ENCODE measurements at regions of chr6 and their contacts with region 1.

Region 1: DNA sequence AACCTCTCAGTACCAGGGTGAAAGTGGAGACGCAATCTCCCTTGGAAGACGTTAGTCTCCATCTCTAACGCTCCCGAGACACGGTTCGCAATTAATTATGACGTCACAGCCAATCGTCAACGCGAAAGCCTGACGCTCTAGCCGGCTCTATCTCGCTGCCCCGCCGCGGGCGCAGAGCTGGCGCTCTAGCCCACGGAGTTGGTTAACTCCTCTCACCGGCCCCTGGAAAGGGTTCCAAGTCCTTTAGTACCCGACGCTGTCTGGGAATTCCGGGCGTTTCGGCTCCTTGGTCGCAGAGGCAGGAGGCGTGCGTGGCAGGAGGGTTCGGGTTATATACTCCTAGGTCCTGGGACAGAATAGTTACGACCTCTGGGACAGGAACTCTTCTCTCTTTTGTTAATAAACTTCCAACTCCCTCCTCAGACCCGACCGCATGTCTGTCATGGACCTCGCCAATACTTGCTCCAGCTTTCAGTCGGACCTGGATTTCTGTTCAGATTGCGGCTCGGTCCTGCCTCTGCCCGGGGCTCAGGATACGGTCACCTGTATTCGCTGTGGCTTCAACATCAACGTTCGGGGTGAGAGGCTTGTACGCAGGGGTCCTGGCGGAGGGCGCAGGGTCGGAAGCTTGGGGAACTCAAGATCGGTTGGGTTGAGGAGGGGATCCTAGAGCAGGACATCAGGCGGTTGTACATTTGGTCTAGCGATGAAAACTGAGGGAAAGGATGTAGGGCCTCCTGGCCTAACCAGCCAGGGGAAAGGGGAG is at the start of gene POLR1H:
- DNase-seq: peak; percentile 95
- ATAC-seq: peak; percentile 98
- H3K4me3 ChIP-seq: peak within 1 kb of the TSS; percentile 89 to 99 (median 93)
- H3K27ac ChIP-seq: peak within 1 kb of the TSS; percentile 75
- H3K4me1 ChIP-seq: peaks cover 35% of the 10 kb centered on the region
- H3K27me3 ChIP-seq: peaks cover 0 to 4% of the 10 kb centered on the region in 2 experiments; a peak in 1 of 5 replicates
- CTCF ChIP-seq: no peak; the same call in 1 of the 2 replicates
- EP300 ChIP-seq: peak; percentile 34 to 59; a peak in 3 of 4 replicates
- POLR2A ChIP-seq: peak; percentile 90 to 97
- RAD21 ChIP-seq: no peak; the same call in 1 of the 2 replicates
- total RNA-seq, gene POLR1H: 79.8 and 106 TPM in 2 replicates

Region 2: GRCh38 chr6:29847871-29848630 is 213.2 kb before region 1 on chr6:
- CTCF ChIA-PET with region 1: no interaction called
- POLR2A ChIA-PET with region 1: no interaction called
- in situ Hi-C with region 1: no loop called
- intact Hi-C with region 1: no loop called
- DNase-seq: peak; percentile 54
- ATAC-seq: peak; percentile 97
- H3K4me3 ChIP-seq: no peak overlapping the region
- H3K27ac ChIP-seq: no peak overlapping the region
- H3K4me1 ChIP-seq: no peaks in the 10 kb centered on the region
- H3K27me3 ChIP-seq: peaks cover 0 to 1% of the 10 kb centered on the region in 2 experiments; a peak in 3 of 5 replicates
- CTCF ChIP-seq: peak; percentile 99
- EP300 ChIP-seq: no peak
- POLR2A ChIP-seq: no peak
- RAD21 ChIP-seq: peak; percentile 99

Region 3: DNA sequence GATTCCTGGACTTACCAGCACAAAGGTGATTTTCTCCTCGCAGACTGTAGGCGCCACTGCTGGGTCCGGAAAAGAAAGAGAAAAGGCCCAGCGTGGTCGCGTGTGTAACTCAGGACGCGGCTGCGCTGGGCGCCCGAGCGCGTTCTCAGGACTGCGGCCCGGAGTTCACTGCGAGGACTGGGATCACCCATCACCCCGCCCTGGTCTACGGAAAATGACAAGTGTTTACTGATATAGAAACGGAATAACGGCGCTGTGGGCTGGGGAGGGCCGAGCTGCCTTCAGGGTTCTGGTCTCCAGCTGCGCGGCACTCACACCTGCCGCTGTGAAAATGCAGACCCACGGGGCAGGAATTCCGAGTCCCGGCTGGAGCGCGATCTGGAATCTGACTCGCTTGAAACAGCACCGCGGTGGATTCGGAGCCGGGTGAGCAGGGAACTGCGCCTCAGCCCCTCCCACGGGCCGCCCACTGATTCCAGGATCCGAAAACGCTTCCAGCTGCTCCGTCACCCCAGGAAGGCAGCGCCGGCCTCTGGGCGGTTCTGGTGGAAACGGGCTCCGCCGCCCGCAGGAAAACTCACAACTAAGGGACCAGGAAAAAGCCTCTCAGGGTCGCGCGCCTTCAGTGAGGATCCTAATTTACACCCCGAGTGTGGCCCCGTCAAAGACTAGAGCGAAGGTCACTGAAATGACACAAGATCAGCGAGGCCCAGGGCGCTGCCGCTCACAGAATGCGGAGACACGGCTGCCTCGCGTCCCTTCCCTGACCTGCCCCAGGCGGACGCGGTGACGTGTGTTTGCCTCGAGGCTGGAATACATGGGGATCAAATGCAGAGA is 84.5 kb before region 1 on chr6:
- CTCF ChIA-PET with region 1: no interaction called
- POLR2A ChIA-PET with region 1: interaction called, 10 read pairs
- in situ Hi-C with region 1: no loop called
- intact Hi-C with region 1: no loop called
- DNase-seq: peak; percentile 77
- ATAC-seq: peak; percentile 93
- H3K4me3 ChIP-seq: peak overlapping the region; percentile 54 to 76 (median 65)
- H3K27ac ChIP-seq: peak overlapping the region; percentile 76
- H3K4me1 ChIP-seq: peaks cover 40% of the 10 kb centered on the region
- H3K27me3 ChIP-seq: no peaks in the 10 kb centered on the region
- CTCF ChIP-seq: peak; percentile 60
- EP300 ChIP-seq: 0 out of 4 replicates have a peak, but pooled peaks of 1 of the 2 experiments have one; percentile 19
- POLR2A ChIP-seq: peak; percentile 57 to 64; a peak in 3 of 4 replicates
- RAD21 ChIP-seq: peak; percentile 60

Region 4: DNA sequence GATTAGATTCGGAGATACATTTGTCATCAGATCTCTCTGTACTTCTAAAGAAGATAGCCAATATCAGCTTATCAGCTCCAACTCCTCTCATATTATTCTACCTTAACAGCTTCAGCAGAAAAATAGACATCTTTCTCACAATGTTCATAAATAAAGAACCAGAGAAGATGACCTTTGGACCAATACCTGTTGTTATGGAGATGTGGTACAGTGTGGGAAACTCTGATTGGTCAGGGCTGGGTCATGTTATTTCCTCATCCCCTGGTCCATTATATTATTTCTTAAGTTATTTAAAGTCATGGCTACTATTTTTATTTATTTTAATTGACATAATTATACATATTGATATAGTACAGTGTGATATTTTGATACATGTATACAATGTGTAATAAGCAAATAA is 36.1 kb before region 1 on chr6:
- CTCF ChIA-PET with region 1: no interaction called
- POLR2A ChIA-PET with region 1: no interaction called
- in situ Hi-C with region 1: no loop called
- intact Hi-C with region 1: no loop called
- DNase-seq: no peak
- ATAC-seq: no peak
- H3K4me3 ChIP-seq: no peak overlapping the region
- H3K27ac ChIP-seq: no peak overlapping the region
- H3K4me1 ChIP-seq: no peaks in the 10 kb centered on the region
- H3K27me3 ChIP-seq: no peaks in the 10 kb centered on the region
- CTCF ChIP-seq: no peak
- EP300 ChIP-seq: no peak
- POLR2A ChIP-seq: no peak
- RAD21 ChIP-seq: no peak

Region 5: DNA sequence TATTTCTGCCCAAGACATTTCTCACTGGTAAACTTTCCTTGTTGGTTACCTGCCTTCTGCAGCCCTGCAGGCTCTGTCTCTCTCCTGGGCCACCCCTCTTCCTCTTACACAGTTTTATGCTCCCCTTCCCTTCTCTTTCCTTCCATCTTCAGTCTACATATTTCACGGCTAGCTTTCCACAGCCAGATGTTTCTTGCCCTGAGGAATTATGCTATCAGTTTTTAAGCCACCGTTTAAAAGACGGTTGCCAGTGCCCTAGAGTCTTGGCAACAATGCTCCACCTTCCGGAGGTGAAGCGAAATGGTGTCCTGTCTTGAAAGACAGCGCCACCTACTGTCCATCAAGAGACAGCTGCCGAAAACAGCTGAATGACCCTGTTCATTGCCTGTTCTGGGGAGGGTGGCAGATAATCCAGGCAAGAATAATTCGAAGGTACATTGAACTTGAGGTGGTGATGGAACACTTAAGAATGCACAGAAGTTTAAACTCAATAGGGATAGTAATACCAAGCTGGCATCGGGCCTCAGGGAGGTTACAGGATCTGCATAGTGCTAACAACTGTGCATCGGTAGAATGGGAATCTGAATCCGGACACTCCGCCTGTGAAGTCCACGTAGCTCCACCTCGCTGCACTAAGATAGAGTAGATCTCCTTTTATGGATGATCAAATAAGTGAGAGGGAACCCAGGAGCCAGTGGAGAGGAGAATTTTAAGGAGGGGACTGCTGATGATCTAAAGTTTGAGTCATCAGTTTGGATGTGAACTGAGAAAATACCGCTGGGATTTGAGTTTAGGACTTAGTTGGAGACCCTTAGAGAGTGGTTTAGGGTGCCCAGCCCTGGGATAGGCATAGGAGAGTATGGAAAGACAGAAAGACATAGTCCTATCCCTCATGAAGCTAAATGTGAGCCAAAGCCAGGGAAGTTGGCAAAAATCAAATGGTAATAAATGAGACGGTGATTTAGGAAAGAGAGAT is 69.9 kb after region 1 on chr6:
- CTCF ChIA-PET with region 1: no interaction called
- POLR2A ChIA-PET with region 1: interaction called, 19 read pairs
- in situ Hi-C with region 1: no loop called
- intact Hi-C with region 1: loop called (anchors 2 kb)
- DNase-seq: peak; percentile 89
- ATAC-seq: peak; percentile 70
- H3K4me3 ChIP-seq: peak overlapping the region in 1 of 3 experiments; percentile 28; a peak in 2 of 6 replicates
- H3K27ac ChIP-seq: no peak overlapping the region
- H3K4me1 ChIP-seq: peaks cover 75% of the 10 kb centered on the region
- H3K27me3 ChIP-seq: no peaks in the 10 kb centered on the region
- CTCF ChIP-seq: peak; percentile 100
- EP300 ChIP-seq: no peak
- POLR2A ChIP-seq: no peak
- RAD21 ChIP-seq: peak; percentile 90

Region 6: DNA sequence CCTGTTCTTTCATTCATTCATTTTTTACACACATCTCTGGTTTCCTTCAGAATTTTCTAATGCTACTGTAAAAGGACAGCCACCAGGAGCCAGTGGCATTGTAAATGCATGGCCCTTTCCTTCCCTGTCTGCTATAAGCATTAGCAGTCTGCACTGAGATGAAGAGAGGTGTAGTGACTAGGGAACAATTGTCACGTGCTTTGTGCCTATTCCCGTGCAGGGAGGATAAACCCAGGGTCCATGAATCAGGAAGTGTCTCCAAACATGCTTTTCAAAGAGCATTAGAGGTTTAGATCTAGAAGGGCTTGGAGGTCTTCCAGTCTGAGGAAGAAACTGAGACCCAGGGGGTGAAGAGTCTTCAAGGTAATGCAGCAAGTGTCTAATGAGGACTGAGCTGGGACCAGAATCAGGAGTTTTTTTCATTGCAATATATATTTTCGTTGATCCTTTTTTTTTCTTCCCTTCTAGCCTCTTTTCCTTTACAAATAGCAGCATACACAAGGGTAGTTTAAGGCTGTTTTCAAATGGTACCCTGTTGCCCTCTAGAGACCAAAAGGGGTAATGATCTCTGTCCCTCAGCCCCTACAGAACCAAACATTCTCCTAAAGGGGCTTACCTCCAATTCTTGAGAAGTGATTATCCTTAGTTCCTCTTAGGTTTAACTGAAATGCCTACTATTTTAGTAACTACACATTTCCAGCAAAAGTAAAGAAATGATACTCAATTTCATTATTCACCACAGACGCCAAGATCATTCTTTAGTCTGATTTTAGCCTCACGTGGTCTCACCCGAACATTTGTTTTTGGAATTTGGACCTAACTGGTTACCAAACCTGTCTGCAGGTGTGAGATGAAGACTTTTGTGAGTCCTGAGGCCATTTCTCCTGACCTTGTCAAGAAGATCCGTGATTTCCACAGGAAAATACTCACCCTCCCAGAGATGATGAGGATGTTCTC is 108.7 kb after region 1 on chr6:
- CTCF ChIA-PET with region 1: no interaction called
- POLR2A ChIA-PET with region 1: interaction called, 4 read pairs
- in situ Hi-C with region 1: no loop called
- intact Hi-C with region 1: loop called (anchors 2 kb)
- DNase-seq: peak; percentile 68
- ATAC-seq: peak; percentile 93
- H3K4me3 ChIP-seq: no peak overlapping the region
- H3K27ac ChIP-seq: no peak overlapping the region
- H3K4me1 ChIP-seq: peaks cover 28% of the 10 kb centered on the region
- H3K27me3 ChIP-seq: peaks cover 0 to under 1% of the 10 kb centered on the region in 2 experiments; a peak in 1 of 5 replicates
- CTCF ChIP-seq: peak; percentile 86
- EP300 ChIP-seq: no peak
- POLR2A ChIP-seq: no peak
- RAD21 ChIP-seq: peak; percentile 89

Region 7: DNA sequence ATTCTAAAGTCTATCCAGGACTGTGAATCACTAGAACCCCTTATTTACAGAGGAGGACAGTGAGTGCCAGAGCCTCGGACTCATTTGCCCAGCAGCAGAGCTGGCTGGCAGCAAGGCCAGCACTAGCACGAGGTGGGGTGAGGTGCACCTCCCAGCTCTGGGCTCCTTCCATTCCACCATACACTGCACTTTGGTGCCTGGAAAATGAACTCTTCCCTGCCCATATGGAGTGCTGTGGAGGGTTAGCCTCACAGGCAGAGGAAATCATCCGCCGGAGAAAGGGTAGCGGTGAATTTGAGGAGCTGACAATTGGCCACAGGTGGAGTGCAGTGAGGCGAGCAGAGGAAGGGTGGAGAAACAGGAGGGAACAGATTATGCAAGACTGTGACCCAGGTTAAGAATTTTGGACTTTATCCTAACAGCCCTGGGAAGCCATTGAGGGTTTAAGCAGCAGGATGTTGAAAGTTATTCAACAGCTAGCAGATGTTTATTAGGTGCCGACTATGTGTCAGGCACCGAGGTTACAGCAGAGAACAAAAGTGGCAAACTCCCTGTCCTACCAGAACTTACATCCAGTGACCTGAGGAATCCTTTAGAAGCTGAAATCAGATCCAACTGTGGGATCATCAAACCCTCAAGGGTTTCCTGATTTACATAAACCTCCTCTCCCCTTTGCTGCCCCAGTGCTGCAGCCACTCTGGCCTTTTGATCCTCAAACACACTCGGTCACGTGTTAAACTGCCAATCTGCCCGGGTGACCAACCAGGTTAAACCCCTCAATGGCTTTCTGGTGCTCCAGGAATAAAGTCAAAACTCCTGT is 145.7 kb after region 1 on chr6:
- CTCF ChIA-PET with region 1: no interaction called
- POLR2A ChIA-PET with region 1: interaction called, 10 read pairs
- in situ Hi-C with region 1: no loop called
- intact Hi-C with region 1: no loop called
- DNase-seq: peak; percentile 95
- ATAC-seq: peak; percentile 82
- H3K4me3 ChIP-seq: peak overlapping the region; percentile 27 to 66 (median 46)
- H3K27ac ChIP-seq: peak overlapping the region; percentile 93
- H3K4me1 ChIP-seq: peaks cover 86% of the 10 kb centered on the region
- H3K27me3 ChIP-seq: no peaks in the 10 kb centered on the region
- CTCF ChIP-seq: no peak
- EP300 ChIP-seq: peak in 1 of 2 experiments; percentile 81; a peak in 2 of 4 replicates
- POLR2A ChIP-seq: peak in 1 of 2 experiments; percentile 54; a peak in 3 of 4 replicates
- RAD21 ChIP-seq: 0 out of 2 replicates have a peak, but pooled peaks have one; percentile 9

Region 8: DNA sequence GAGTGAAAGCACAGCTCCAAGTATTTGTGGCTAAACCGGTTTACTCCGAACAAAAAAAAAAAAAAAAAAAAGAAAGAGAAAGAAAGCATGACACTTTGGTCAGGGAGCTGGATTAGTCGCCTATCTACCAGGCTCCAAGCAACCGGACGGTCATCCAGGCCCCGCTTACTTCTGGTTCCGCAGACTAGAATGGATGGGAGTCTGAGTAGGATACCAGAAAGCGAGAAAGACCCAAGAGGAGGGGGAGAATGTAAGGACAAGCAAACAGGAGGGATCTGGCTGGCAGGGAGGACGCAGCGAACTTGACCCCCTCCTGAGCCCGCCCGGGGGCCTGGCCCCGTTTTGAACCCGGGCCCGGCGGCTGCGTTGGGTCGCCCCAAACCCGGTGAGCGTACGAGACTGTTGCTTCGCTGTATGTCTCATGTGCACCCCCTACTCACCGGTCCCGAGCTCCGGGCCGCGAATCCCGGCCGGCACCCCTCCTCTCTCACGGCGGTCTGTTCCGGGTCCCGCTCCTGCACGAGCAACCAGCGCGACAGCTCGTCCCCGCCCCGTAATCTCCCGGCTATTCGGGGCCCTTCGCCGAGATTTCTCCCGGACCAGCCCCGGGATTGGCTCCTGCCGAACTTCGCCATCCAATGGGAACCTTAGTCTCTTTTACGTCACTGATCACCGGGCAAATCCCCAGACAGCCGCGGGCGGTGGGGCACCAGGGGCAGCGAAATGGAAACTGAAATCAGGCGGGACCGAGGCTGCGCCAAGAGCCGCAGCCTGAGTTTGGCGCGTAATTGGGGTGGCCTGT is 151.8 kb after region 1 on chr6 and contains the start of gene TRIM26:
- CTCF ChIA-PET with region 1: no interaction called
- POLR2A ChIA-PET with region 1: interaction called, 11 read pairs
- in situ Hi-C with region 1: no loop called
- intact Hi-C with region 1: no loop called
- DNase-seq: peak; percentile 97
- ATAC-seq: peak; percentile 94
- H3K4me3 ChIP-seq: peak within 1 kb of the TSS; percentile 92 to 99 (median 95)
- H3K27ac ChIP-seq: peak within 1 kb of the TSS; percentile 93
- H3K4me1 ChIP-seq: peaks cover 50% of the 10 kb centered on the region
- H3K27me3 ChIP-seq: peaks cover 0 to 2% of the 10 kb centered on the region in 2 experiments; a peak in 1 of 5 replicates
- CTCF ChIP-seq: no peak; the same call in 1 of the 2 replicates
- EP300 ChIP-seq: peak in 1 of 2 experiments; percentile 66; a peak in 2 of 4 replicates
- POLR2A ChIP-seq: peak; percentile 84 to 94
- RAD21 ChIP-seq: peak; percentile 43; the same call in 1 of the 2 replicates
- total RNA-seq, gene TRIM26: 38.7 and 46.2 TPM in 2 replicates

Region 9: GRCh38 chr6:30378290-30378937 is 317.1 kb after region 1 on chr6:
- CTCF ChIA-PET with region 1: no interaction called
- POLR2A ChIA-PET with region 1: no interaction called
- in situ Hi-C with region 1: no loop called
- intact Hi-C with region 1: no loop called
- DNase-seq: peak; percentile 61
- ATAC-seq: peak; percentile 55; the same call in 1 of the 3 replicates
- H3K4me3 ChIP-seq: no peak overlapping the region
- H3K27ac ChIP-seq: no peak overlapping the region
- H3K4me1 ChIP-seq: no peaks in the 10 kb centered on the region
- H3K27me3 ChIP-seq: peaks cover 0 to 3% of the 10 kb centered on the region in 2 experiments; a peak in 1 of 5 replicates
- CTCF ChIP-seq: no peak
- EP300 ChIP-seq: no peak
- POLR2A ChIP-seq: no peak
- RAD21 ChIP-seq: no peak

Measured in HepG2 (cell line).